IMR-90 (cell line): ENCODE measurements at regions of chr7 and their contacts with region 1.

Region 1: DNA sequence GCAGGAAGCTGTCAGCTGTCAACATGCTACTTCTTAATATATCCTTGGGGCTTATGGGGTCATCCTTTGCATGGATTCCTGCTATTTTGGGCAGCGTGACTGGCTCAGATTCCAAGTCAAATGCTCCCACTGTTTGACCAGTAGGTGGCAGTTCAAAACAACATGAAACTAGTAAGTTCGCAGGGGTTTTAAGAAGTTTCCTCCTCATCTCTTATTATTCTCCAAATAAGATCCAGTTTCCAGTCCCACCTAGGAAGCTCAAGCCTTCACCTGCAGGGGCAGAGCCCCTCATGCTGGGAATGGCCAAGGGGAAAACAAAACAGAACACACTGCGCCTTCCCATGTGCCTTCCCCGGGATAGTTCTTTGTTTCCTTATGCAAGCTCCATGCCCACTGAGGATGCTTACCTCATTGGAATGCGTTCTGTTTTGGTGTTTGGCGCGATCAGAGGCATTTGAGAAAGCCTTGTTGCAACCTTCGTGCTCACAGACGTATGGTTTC is 259.8 kb downstream of the GLI3 start:
- DNase-seq: peak; percentile 75
- ATAC-seq: peak; percentile 76
- H3K4me3 ChIP-seq: no peak overlapping the region
- H3K27ac ChIP-seq: no peak overlapping the region
- H3K4me1 ChIP-seq: peaks cover 7% of the 10 kb centered on the region; the same call in 1 of the 2 replicates
- H3K27me3 ChIP-seq: no peaks in the 10 kb centered on the region
- CTCF ChIP-seq: peak; percentile 74
- POLR2A ChIP-seq: no peak
- RAD21 ChIP-seq: peak; percentile 72

Region 2: DNA sequence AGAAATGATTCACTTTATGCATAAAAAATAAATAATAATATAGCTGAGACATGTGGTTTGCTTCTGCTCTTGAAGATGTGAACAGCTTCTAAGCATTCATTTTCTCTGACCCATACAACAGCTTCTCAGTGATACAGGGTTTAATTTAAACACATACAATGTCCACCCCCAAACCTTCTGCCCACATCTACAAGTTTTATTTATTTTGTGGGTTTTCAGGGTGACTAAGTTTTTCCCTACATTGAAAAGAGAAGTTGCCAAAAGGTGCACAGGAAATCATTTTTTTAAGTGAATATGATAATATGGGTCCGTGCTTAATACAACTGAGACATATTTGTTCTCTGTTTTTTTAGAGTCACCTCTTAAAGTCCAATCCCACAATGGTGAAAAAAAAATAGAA is 291.5 kb before region 1 on chr7:
- CTCF ChIA-PET with region 1: no interaction called
- POLR2A ChIA-PET with region 1: no interaction called
- dilution Hi-C with region 1: no loop called
- in situ Hi-C with region 1: no loop called
- intact Hi-C with region 1: no loop called
- DNase-seq: peak; percentile 86
- ATAC-seq: peak; percentile 31
- H3K4me3 ChIP-seq: no peak overlapping the region
- H3K27ac ChIP-seq: no peak overlapping the region
- H3K4me1 ChIP-seq: peaks cover 2% of the 10 kb centered on the region; the same call in 1 of the 2 replicates
- H3K27me3 ChIP-seq: no peaks in the 10 kb centered on the region
- CTCF ChIP-seq: no peak
- POLR2A ChIP-seq: peak; percentile 11; the same call in 1 of the 2 replicates
- RAD21 ChIP-seq: no peak

Region 3: DNA sequence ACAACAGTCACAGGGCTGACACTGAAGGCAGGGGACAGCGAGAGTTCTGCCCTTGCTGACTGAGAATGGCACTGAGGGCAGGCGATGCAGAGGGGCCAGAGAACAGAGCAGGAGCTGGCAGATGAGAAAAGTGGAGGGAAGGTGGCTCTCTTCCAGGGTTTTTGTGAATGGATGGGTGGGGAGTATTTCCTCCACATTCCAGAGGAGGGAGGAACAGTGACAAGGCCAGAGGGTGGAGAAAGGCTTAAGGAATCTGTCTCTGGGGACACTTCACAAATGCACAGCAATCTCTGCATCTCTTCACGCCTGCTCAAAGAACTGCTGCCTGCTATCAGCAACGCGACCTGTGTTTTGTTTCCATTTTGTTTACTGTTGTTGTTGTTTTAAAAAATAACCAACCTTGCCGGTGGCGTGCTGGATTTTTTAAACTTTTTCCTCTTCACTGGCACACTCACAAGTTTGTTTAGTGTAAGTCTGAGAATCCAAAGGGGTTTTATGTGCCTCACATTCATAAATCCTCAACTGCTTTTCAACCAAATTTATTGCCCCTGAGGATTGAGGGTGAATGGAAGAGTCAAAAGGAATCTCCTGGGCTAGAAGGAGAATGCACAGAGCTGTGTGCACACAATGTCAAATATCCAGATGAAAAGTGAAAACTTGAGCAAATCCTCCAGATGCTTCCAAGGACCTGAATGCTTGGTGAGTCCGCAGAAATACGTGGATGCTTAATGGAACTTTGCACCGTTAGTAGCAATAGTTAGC is 130.5 kb after region 1 on chr7:
- CTCF ChIA-PET with region 1: no interaction called
- POLR2A ChIA-PET with region 1: no interaction called
- dilution Hi-C with region 1: no loop called
- in situ Hi-C with region 1: no loop called
- intact Hi-C with region 1: no loop called
- DNase-seq: no peak
- ATAC-seq: peak; percentile 54
- H3K4me3 ChIP-seq: no peak overlapping the region
- H3K27ac ChIP-seq: no peak overlapping the region
- H3K4me1 ChIP-seq: peaks cover 9% of the 10 kb centered on the region; the same call in 1 of the 2 replicates
- H3K27me3 ChIP-seq: no peaks in the 10 kb centered on the region
- CTCF ChIP-seq: no peak
- POLR2A ChIP-seq: no peak
- RAD21 ChIP-seq: no peak

Region 4: GRCh38 chr7:42237162-42237821 is 260.1 kb after region 1 on chr7 and contains the start of gene GLI3:
- CTCF ChIA-PET with region 1: no interaction called
- POLR2A ChIA-PET with region 1: no interaction called
- dilution Hi-C with region 1: no loop called
- in situ Hi-C with region 1: loop called (anchors 25 kb)
- intact Hi-C with region 1: loop called (anchors 2 kb)
- DNase-seq: peak; percentile 93
- ATAC-seq: peak; percentile 65
- H3K4me3 ChIP-seq: peak within 1 kb of the TSS; percentile 55
- H3K27ac ChIP-seq: peak within 1 kb of the TSS; percentile 90
- H3K4me1 ChIP-seq: peaks cover 9% of the 10 kb centered on the region
- H3K27me3 ChIP-seq: no peaks in the 10 kb centered on the region
- CTCF ChIP-seq: peak; percentile 36; the same call in 1 of the 2 replicates
- POLR2A ChIP-seq: peak; percentile 47
- RAD21 ChIP-seq: no peak
- total RNA-seq, gene GLI3: 1.3 and 1.7 TPM in 2 replicates

Region 5: DNA sequence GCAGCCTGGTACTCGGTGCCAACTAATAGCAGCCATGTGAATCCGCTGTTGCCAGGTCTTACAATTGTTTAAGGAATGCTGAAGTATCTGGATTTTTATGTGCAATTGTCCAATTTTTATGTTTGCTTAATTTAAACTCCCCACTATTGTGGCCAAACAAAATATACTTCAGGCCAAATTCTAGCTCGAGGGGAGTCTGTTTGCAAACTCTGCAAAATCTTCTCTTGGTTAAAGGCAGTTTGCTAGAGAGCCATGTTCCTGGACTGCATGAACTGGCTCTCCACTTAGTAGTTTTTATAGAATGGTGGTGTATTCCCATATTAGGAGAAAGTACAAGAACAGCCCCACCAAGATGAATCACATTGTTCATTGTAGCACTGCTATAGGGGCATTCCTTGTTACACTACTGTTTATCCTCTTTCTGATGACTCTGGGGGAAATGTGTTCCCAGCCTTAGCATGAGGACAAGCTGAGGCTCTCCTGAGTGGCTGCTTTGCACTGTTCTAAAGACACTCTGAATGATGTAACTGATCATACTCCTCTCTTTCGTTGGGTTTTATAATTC is 437.8 kb after region 1 on chr7:
- CTCF ChIA-PET with region 1: no interaction called
- POLR2A ChIA-PET with region 1: no interaction called
- dilution Hi-C with region 1: no loop called
- in situ Hi-C with region 1: no loop called
- intact Hi-C with region 1: loop called (anchors 10 kb)
- DNase-seq: no peak
- ATAC-seq: no peak
- H3K4me3 ChIP-seq: no peak overlapping the region
- H3K27ac ChIP-seq: no peak overlapping the region
- H3K4me1 ChIP-seq: no peaks in the 10 kb centered on the region
- H3K27me3 ChIP-seq: no peaks in the 10 kb centered on the region
- CTCF ChIP-seq: no peak
- POLR2A ChIP-seq: no peak
- RAD21 ChIP-seq: no peak

Region 6: DNA sequence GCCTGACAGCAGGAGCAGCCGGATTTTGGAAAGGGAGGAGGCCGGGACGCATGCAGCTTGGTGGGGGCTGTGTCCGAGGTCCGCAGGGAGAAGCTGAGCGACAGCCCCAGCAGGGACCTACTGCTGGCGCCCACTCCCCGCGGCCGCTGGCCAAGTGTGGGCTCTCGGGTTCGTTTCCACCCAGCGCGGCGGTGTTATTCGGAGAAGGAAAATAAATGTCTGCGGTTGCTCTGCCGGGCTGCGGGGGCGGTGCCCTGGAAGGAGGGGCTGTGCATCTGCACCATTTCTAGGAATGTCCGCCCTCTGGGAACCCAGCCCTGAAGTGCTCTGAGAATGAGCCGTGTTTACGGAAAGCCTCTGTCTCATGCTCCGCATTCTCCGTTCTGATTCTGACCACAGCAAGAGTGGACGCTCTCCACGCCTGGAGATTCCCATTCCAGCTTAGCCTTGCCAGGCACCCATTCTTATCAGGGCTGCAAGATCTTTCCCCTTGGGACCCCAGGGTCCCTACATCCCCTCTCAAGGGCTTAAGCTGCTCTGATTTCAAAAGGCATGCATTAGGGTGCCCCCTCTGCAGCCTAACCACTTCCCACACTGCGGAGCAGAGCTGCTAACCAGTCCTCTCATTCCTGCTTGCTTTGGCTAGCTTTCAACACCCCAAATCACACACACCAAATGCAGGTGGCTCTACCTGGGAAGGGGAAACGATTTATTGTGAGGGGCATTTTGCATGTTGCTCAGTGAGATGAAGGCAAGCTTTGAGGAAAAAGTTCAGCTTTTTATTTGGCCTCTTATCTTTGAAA is 516.4 kb after region 1 on chr7:
- CTCF ChIA-PET with region 1: no interaction called
- POLR2A ChIA-PET with region 1: no interaction called
- dilution Hi-C with region 1: no loop called
- in situ Hi-C with region 1: no loop called
- intact Hi-C with region 1: loop called (anchors 5 kb)
- DNase-seq: peak; percentile 76
- ATAC-seq: peak; percentile 100
- H3K4me3 ChIP-seq: peak overlapping the region; percentile 9; the same call in 1 of the 2 replicates
- H3K27ac ChIP-seq: no peak overlapping the region
- H3K4me1 ChIP-seq: peaks cover 3% of the 10 kb centered on the region; the same call in 1 of the 2 replicates
- H3K27me3 ChIP-seq: peaks cover 6% of the 10 kb centered on the region
- CTCF ChIP-seq: no peak
- POLR2A ChIP-seq: no peak
- RAD21 ChIP-seq: no peak

Region 7: GRCh38 chr7:42574685-42575084 is 597.5 kb after region 1 on chr7:
- CTCF ChIA-PET with region 1: no interaction called
- POLR2A ChIA-PET with region 1: no interaction called
- dilution Hi-C with region 1: no loop called
- in situ Hi-C with region 1: no loop called
- intact Hi-C with region 1: loop called (anchors 5 kb)
- DNase-seq: no peak
- ATAC-seq: no peak
- H3K4me3 ChIP-seq: no peak overlapping the region
- H3K27ac ChIP-seq: no peak overlapping the region
- H3K4me1 ChIP-seq: no peaks in the 10 kb centered on the region
- H3K27me3 ChIP-seq: peaks cover 5% of the 10 kb centered on the region
- CTCF ChIP-seq: no peak
- POLR2A ChIP-seq: no peak
- RAD21 ChIP-seq: no peak

Region 8: GRCh38 chr7:42690794-42691639 is 713.8 kb after region 1 on chr7:
- CTCF ChIA-PET with region 1: no interaction called
- POLR2A ChIA-PET with region 1: no interaction called
- dilution Hi-C with region 1: no loop called
- in situ Hi-C with region 1: no loop called
- intact Hi-C with region 1: loop called (anchors 1 kb)
- DNase-seq: peak; percentile 39
- ATAC-seq: peak; percentile 84
- H3K4me3 ChIP-seq: no peak overlapping the region
- H3K27ac ChIP-seq: no peak overlapping the region
- H3K4me1 ChIP-seq: no peaks in the 10 kb centered on the region
- H3K27me3 ChIP-seq: no peaks in the 10 kb centered on the region; the same call in 1 of the 2 replicates
- CTCF ChIP-seq: peak; percentile 48
- POLR2A ChIP-seq: no peak
- RAD21 ChIP-seq: peak; percentile 58

Region 9: GRCh38 chr7:42831718-42832431 is 854.7 kb after region 1 on chr7:
- CTCF ChIA-PET with region 1: interaction called, 7 read pairs
- POLR2A ChIA-PET with region 1: no interaction called
- dilution Hi-C with region 1: no loop called
- in situ Hi-C with region 1: no loop called
- intact Hi-C with region 1: loop called (anchors 2 kb)
- DNase-seq: peak; percentile 36
- ATAC-seq: peak; percentile 87
- H3K4me3 ChIP-seq: no peak overlapping the region
- H3K27ac ChIP-seq: no peak overlapping the region
- H3K4me1 ChIP-seq: peaks cover 8% of the 10 kb centered on the region; the same call in 1 of the 2 replicates
- H3K27me3 ChIP-seq: peaks cover 11% of the 10 kb centered on the region
- CTCF ChIP-seq: peak; percentile 58
- POLR2A ChIP-seq: no peak
- RAD21 ChIP-seq: peak; percentile 53